ENCODE measurements at regions of chr7 and their contacts with region 1.

Region 1: DNA sequence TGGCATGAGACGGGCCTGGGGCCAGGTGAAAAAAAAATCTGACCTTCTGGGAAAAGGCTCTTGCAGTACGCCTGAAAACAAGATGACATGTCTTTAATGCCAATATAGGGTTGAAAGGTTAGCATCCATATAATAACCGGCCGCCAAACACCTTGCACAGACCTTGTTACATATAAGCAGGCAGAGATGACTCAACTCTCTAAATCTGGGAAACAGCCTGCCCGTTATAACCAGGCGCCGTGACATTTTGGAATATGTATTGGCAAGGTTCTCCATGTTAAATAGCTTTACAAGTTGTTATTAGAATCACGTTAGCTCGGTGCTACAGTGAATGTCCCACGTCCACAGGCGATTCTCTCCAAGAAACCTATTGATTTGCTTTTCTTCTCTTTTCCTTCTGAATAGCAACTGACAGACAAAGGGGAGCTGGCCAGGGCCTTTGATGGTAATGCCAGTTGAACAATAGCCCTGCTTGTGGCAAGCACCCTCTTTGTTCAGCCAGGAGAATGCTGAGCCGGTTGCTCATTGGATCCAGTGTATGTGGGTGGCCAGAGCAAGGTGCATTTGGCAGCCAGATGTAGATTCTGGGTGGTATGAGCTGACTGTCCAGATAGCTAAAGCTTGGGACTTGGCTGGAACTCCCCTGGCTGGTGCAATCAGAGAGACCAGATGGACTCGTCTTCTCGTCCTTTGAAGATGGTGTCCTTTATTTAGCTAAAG is 80.1 kb upstream of the AUTS2 start:
- DNase-seq: no peak
- ATAC-seq: no peak
- H3K4me3 ChIP-seq: no peak overlapping the region
- H3K27ac ChIP-seq: no peak overlapping the region
- H3K4me1 ChIP-seq: peaks cover 0 to 14% (median 0%) of the 10 kb centered on the region in 9 donors
- H3K27me3 ChIP-seq: no peaks in the 10 kb centered on the region
- CTCF ChIP-seq: no peak

Region 2: GRCh38 chr7:69109246-69109645 is 408.9 kb before region 1 on chr7:
- intact Hi-C with region 1: no loop called
- DNase-seq: no peak
- ATAC-seq: no peak
- H3K4me3 ChIP-seq: no peak overlapping the region
- H3K27ac ChIP-seq: no peak overlapping the region
- H3K4me1 ChIP-seq: peaks cover 0 to 9% (median 0%) of the 10 kb centered on the region in 9 donors
- H3K27me3 ChIP-seq: no peaks in the 10 kb centered on the region
- CTCF ChIP-seq: no peak

Region 3: DNA sequence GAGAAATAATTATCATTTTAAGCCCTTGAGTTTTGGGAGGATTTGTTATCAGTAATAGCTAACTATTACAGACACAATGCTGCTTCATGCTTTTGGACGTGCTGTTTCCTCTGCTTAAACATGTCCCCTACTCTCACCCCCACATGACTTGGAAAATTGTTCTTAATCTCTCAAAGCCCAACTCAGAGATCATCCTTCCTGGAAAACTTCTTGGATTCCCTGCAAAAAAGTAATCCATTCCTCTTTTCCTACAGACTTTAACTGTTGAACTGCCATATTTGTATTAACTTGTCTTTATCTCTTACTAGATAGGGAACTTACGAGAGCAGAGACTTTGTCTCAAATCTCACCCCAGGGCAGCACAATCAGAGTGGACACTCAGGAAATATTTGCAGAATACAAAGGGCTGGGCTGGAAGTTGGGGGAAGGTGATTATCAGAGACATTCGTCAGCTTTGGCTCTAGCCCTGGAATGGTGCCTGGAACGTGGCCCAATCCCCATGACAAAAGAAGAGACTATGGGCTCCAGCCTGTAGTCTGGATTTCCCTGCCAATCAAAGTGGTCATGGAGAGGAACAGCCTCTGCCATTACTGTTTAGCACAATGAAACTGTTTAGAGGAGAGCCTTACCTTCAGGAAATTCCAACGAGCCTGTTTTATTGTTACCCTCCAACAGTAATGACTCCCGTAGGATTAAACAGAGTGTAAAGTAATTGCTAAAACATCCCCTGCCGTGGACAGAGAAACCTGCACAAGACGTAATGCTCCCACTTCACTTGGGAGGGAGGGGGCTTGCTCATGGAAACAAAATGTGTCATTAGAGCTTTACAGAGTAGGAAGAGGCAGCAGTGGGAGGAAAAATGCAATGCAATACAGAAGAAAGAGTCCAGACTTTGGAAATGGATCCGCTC is 60.3 kb before region 1 on chr7:
- intact Hi-C with region 1: loop called in 1 of 10 experiments (anchors 2 kb)
- DNase-seq: peak; percentile 68 to 89
- ATAC-seq: peak; percentile 92 to 97 (median 95)
- H3K4me3 ChIP-seq: no peak overlapping the region
- H3K27ac ChIP-seq: peak overlapping the region in 8 of 10 donors; percentile 25 to 74 (median 44)
- H3K4me1 ChIP-seq: peaks cover 2 to 18% (median 16%) of the 10 kb centered on the region in 9 donors
- H3K27me3 ChIP-seq: no peaks in the 10 kb centered on the region
- CTCF ChIP-seq: no peak

Measured in heart right ventricle (tissue), 16 donors.